Astrocyte of the spinal cord (primary cell): ENCODE measurements at regions of chr16 and their contacts with region 1.

Region 1: GRCh38 chr16:51762081-51762996 is 611.3 kb upstream of the SALL1 start:
- DNase-seq: peak; percentile 81
- H3K4me3 ChIP-seq: no peak overlapping the region
- CTCF ChIP-seq: peak; percentile 97

Region 2: DNA sequence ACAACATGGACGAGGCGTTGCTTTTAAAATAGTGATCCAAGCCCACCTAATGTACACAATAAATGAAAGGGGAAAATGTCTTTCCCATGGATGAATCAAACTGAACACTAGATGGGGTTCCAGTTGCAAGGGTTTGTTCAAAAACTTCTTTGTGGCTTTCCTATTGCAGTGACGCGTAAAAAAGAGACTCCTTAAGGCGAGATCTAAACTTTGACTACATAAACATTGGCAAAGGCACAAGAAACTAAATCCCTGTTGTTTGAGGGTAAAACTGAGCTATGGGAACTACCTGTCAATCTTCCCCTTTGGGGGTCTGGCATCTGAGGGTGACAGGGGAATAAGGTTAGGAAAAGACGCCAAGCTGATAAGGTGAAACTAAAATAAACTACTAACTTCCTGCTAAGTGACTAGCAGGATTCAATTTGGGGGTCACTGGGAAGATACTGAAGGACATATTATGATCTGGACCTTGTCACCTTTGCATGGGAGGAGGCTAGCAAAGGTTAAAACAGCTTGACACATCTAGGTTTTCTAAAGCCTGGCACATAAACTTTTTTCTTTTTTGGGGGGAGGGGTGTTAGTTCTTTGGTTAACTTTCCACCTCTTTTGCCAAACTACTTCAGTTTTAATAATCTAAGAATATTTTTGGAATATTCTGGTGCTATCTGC is 615.9 kb before region 1 on chr16:
- in situ Hi-C with region 1: loop called (anchors 25 kb)
- DNase-seq: peak; percentile 77
- H3K4me3 ChIP-seq: peak overlapping the region; percentile 16
- CTCF ChIP-seq: peak; percentile 59

Region 3: DNA sequence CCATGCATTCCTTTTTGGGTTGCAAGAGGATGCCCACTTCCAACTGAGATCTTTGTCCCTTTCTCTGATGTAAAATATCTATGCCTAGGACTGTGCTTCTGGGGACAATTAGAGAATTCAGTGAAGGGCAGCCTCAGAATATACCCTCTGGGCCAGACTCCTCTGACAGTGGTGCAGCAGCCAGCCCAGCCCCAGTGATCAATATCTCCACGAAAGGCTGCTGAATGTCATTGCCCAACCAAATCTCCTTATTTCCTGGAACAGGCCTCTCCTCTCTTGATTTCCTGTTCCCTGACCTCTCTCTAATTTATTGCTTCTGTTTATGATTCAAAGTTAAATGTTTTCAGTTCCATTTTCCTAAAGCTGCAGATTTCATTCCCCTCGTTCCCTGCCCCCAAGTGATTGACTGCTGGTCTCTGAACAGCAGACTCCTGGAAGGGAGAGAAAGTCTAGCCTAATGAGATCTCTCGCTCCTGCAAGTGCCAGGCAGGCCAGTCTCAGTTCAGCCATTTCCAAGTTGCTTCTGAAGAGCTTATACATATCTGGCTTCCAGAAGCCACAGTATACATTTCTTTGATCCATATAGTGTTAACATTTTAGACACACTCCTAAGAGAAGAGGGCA is 506.9 kb before region 1 on chr16:
- in situ Hi-C with region 1: no loop called
- DNase-seq: no peak
- H3K4me3 ChIP-seq: no peak overlapping the region
- CTCF ChIP-seq: no peak

Region 4: DNA sequence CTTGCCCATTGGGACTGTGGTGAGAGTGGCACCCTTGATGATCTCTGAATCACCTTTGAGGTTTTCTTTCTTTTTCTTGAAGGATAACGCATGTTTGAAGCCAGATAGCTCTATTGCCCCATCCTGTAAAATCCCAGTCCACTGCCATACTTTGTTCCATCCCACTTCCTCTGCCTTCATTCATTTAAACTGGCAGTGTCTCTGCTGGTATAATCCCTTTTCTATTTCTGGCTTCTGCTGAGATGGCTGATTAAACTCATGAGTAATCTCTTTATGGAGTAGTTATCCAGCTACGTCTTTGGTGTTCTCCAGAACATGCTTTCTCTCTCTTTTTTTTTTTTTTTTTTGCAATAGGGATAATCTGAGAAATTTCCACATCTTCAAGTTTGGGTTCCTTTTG is 45.2 kb after region 1 on chr16:
- in situ Hi-C with region 1: no loop called
- DNase-seq: no peak
- H3K4me3 ChIP-seq: no peak overlapping the region
- CTCF ChIP-seq: no peak